CD8-positive, alpha-beta T cell (primary cell): ENCODE measurements at regions of chr15 and their contacts with region 1.

Region 1: GRCh38 chr15:97552548-97552947 is 408.0 kb upstream of the ARRDC4 start:
- DNase-seq: no peak
- ATAC-seq: no peak
- H3K4me3 ChIP-seq: no peak overlapping the region
- H3K4me3 Mint-ChIP-seq: no peak overlapping the region
- H3K27ac ChIP-seq: no peak overlapping the region
- H3K27ac Mint-ChIP-seq: no peak overlapping the region
- H3K4me1 ChIP-seq: no peaks in the 10 kb centered on the region
- H3K4me1 Mint-ChIP-seq: no peaks in the 10 kb centered on the region
- H3K27me3 ChIP-seq: no peaks in the 10 kb centered on the region
- H3K27me3 Mint-ChIP-seq: no peaks in the 10 kb centered on the region
- CTCF ChIP-seq: no peak

Region 2: GRCh38 chr15:97482521-97482920 is 70.0 kb before region 1 on chr15:
- CTCF ChIA-PET with region 1: no interaction called
- POLR2A ChIA-PET with region 1: no interaction called
- intact Hi-C with region 1: no loop called
- DNase-seq: no peak
- ATAC-seq: no peak
- H3K4me3 ChIP-seq: no peak overlapping the region
- H3K4me3 Mint-ChIP-seq: no peak overlapping the region
- H3K27ac ChIP-seq: no peak overlapping the region
- H3K27ac Mint-ChIP-seq: no peak overlapping the region
- H3K4me1 ChIP-seq: no peaks in the 10 kb centered on the region
- H3K4me1 Mint-ChIP-seq: no peaks in the 10 kb centered on the region
- H3K27me3 ChIP-seq: no peaks in the 10 kb centered on the region
- H3K27me3 Mint-ChIP-seq: no peaks in the 10 kb centered on the region
- CTCF ChIP-seq: no peak

Region 3: GRCh38 chr15:97612062-97612461 is 59.5 kb after region 1 on chr15:
- CTCF ChIA-PET with region 1: no interaction called
- POLR2A ChIA-PET with region 1: no interaction called
- intact Hi-C with region 1: loop called in 1 of 2 experiments (anchors 10 kb)
- DNase-seq: no peak
- ATAC-seq: no peak
- H3K4me3 ChIP-seq: no peak overlapping the region
- H3K4me3 Mint-ChIP-seq: no peak overlapping the region
- H3K27ac ChIP-seq: no peak overlapping the region
- H3K27ac Mint-ChIP-seq: no peak overlapping the region
- H3K4me1 ChIP-seq: no peaks in the 10 kb centered on the region
- H3K4me1 Mint-ChIP-seq: no peaks in the 10 kb centered on the region
- H3K27me3 ChIP-seq: no peaks in the 10 kb centered on the region
- H3K27me3 Mint-ChIP-seq: no peaks in the 10 kb centered on the region
- CTCF ChIP-seq: no peak

Region 4: GRCh38 chr15:98842192-98842966 is 1289.8 kb after region 1 on chr15:
- CTCF ChIA-PET with region 1: no interaction called
- POLR2A ChIA-PET with region 1: no interaction called
- intact Hi-C with region 1: no loop called
- DNase-seq: no peak
- ATAC-seq: no peak
- H3K4me3 ChIP-seq: no peak overlapping the region
- H3K4me3 Mint-ChIP-seq: no peak overlapping the region
- H3K27ac ChIP-seq: no peak overlapping the region
- H3K27ac Mint-ChIP-seq: peak overlapping the region; percentile 18
- H3K4me1 ChIP-seq: peaks cover 10% of the 10 kb centered on the region
- H3K4me1 Mint-ChIP-seq: peaks cover 26% of the 10 kb centered on the region
- H3K27me3 ChIP-seq: no peaks in the 10 kb centered on the region
- H3K27me3 Mint-ChIP-seq: no peaks in the 10 kb centered on the region
- CTCF ChIP-seq: no peak